ENCODE measurements at regions of chr1 and their contacts with region 1.

Region 1: GRCh38 chr1:241531195-241532161 is 700 bp upstream of the KMO start:
- DNase-seq: peak; percentile 91
- ATAC-seq: peak; percentile 68
- H3K4me3 ChIP-seq: peak overlapping the region; percentile 58 to 98 (median 78)
- H3K4me3 Mint-ChIP-seq: peak overlapping the region; percentile 92
- H3K27ac ChIP-seq: peak overlapping the region; percentile 87 to 96
- H3K27ac Mint-ChIP-seq: peak overlapping the region; percentile 96
- H3K4me1 ChIP-seq: peaks cover 29 to 41% of the 10 kb centered on the region in 2 donors
- H3K4me1 Mint-ChIP-seq: peaks cover 42% of the 10 kb centered on the region
- H3K27me3 ChIP-seq: no peaks in the 10 kb centered on the region
- H3K27me3 Mint-ChIP-seq: no peaks in the 10 kb centered on the region
- CTCF ChIP-seq: peak; percentile 93

Region 2: GRCh38 chr1:241519308-241520079 is 12.0 kb before region 1 on chr1 and contains the start of gene FH:
- CTCF ChIA-PET with region 1: no interaction called
- POLR2A ChIA-PET with region 1: no interaction called
- intact Hi-C with region 1: loop called (anchors 1 kb)
- DNase-seq: peak; percentile 97
- ATAC-seq: peak; percentile 98
- H3K4me3 ChIP-seq: peak within 1 kb of the TSS; percentile 56 to 84 (median 79)
- H3K4me3 Mint-ChIP-seq: peak within 1 kb of the TSS; percentile 89
- H3K27ac ChIP-seq: peak within 1 kb of the TSS; percentile 56 to 84
- H3K27ac Mint-ChIP-seq: peak within 1 kb of the TSS; percentile 71
- H3K4me1 ChIP-seq: peaks cover 9 to 10% of the 10 kb centered on the region in 2 donors
- H3K4me1 Mint-ChIP-seq: peaks cover 23% of the 10 kb centered on the region
- H3K27me3 ChIP-seq: peaks cover 0 to 3% (median 0%) of the 10 kb centered on the region in 4 experiments
- H3K27me3 Mint-ChIP-seq: peaks cover 3% of the 10 kb centered on the region
- CTCF ChIP-seq: no peak
- total RNA-seq, gene FH: 26.0 and 32.4 TPM in 2 replicates

Region 3: GRCh38 chr1:241600496-241600901 is 69.0 kb after region 1 on chr1:
- CTCF ChIA-PET with region 1: interaction called, 4 read pairs
- POLR2A ChIA-PET with region 1: no interaction called
- intact Hi-C with region 1: loop called (anchors 1 kb)
- DNase-seq: peak; percentile 24
- ATAC-seq: peak; percentile 49
- H3K4me3 ChIP-seq: peak overlapping the region in 1 of 5 experiments; percentile 3
- H3K4me3 Mint-ChIP-seq: peak overlapping the region; percentile 35
- H3K27ac ChIP-seq: peak overlapping the region; percentile 34 to 67
- H3K27ac Mint-ChIP-seq: peak overlapping the region; percentile 79
- H3K4me1 ChIP-seq: peaks cover 33 to 37% of the 10 kb centered on the region in 2 donors
- H3K4me1 Mint-ChIP-seq: peaks cover 49% of the 10 kb centered on the region
- H3K27me3 ChIP-seq: no peaks in the 10 kb centered on the region
- H3K27me3 Mint-ChIP-seq: no peaks in the 10 kb centered on the region
- CTCF ChIP-seq: no peak

Region 4: GRCh38 chr1:241640029-241640818 is 108.7 kb after region 1 on chr1 and contains the starts of genes CHML and OPN3:
- CTCF ChIA-PET with region 1: interaction called, 3 read pairs
- POLR2A ChIA-PET with region 1: interaction called, 5 read pairs
- intact Hi-C with region 1: loop called (anchors 1 kb)
- DNase-seq: peak; percentile 93
- ATAC-seq: peak; percentile 94
- H3K4me3 ChIP-seq: peak within 1 kb of the TSS; percentile 78 to 97 (median 94)
- H3K4me3 Mint-ChIP-seq: peak within 1 kb of the TSS; percentile 84
- H3K27ac ChIP-seq: peak within 1 kb of the TSS; percentile 71 to 81
- H3K27ac Mint-ChIP-seq: peak within 1 kb of the TSS; percentile 93
- H3K4me1 ChIP-seq: peaks cover 37 to 43% of the 10 kb centered on the region in 2 donors
- H3K4me1 Mint-ChIP-seq: peaks cover 51% of the 10 kb centered on the region
- H3K27me3 ChIP-seq: no peaks in the 10 kb centered on the region
- H3K27me3 Mint-ChIP-seq: no peaks in the 10 kb centered on the region
- CTCF ChIP-seq: no peak
- total RNA-seq, gene CHML: 31.5 and 34.0 TPM in 2 replicates
- total RNA-seq, gene OPN3: 29.2 and 29.6 TPM in 2 replicates

Region 5: GRCh38 chr1:241895013-241895412 is 363.5 kb after region 1 on chr1:
- CTCF ChIA-PET with region 1: no interaction called
- POLR2A ChIA-PET with region 1: no interaction called
- intact Hi-C with region 1: loop called (anchors 5 kb)
- DNase-seq: no peak
- ATAC-seq: no peak
- H3K4me3 ChIP-seq: no peak overlapping the region
- H3K4me3 Mint-ChIP-seq: no peak overlapping the region
- H3K27ac ChIP-seq: no peak overlapping the region
- H3K27ac Mint-ChIP-seq: no peak overlapping the region
- H3K4me1 ChIP-seq: peaks cover 12 to 15% of the 10 kb centered on the region in 2 donors
- H3K4me1 Mint-ChIP-seq: peaks cover 15% of the 10 kb centered on the region
- H3K27me3 ChIP-seq: no peaks in the 10 kb centered on the region
- H3K27me3 Mint-ChIP-seq: no peaks in the 10 kb centered on the region
- CTCF ChIP-seq: no peak

Region 6: GRCh38 chr1:242139443-242139842 is 608.0 kb after region 1 on chr1:
- CTCF ChIA-PET with region 1: no interaction called
- POLR2A ChIA-PET with region 1: no interaction called
- intact Hi-C with region 1: no loop called
- DNase-seq: no peak
- ATAC-seq: no peak
- H3K4me3 ChIP-seq: no peak overlapping the region
- H3K4me3 Mint-ChIP-seq: no peak overlapping the region
- H3K27ac ChIP-seq: no peak overlapping the region
- H3K27ac Mint-ChIP-seq: no peak overlapping the region
- H3K4me1 ChIP-seq: no peaks in the 10 kb centered on the region
- H3K4me1 Mint-ChIP-seq: no peaks in the 10 kb centered on the region
- H3K27me3 ChIP-seq: peaks cover 0 to 8% (median 0%) of the 10 kb centered on the region in 4 experiments
- H3K27me3 Mint-ChIP-seq: peaks cover 19% of the 10 kb centered on the region
- CTCF ChIP-seq: no peak

Region 7: DNA sequence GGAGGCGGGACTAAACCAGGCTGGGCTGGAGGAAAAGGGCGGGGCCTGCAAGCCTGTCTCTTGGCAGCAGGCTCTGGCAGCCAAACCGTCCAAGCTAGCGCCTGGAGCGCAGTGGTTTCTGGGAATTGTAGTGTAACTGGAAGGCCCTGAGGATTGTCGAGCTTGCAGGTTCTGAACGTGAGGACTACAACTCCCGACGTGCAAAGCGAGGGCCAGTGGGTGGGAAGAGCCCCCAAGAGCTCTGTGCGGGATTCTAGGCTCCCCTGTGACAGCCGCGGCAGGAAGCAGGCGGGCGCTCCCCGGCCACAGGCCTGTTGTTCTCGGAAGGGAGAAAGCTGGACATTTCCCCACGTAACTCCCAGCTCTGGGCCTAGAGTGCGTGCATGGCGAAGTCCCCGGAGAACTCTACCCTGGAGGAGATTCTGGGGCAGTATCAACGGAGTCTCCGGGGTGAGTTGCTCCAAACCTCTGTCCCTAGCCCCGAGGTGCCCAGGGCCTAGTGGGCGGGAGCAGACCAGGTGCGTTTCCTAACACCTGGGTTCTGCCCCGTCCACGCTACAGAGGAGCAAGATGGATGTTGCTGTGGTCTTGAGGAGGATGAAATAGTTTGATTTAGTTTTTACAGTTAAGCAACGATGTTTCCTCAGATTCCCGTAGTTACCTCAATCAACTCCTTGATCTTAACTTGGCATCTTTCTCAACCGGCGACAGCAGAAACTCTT is 1724.5 kb after region 1 on chr1 and contains the start of gene SDCCAG8:
- CTCF ChIA-PET with region 1: no interaction called
- POLR2A ChIA-PET with region 1: no interaction called
- intact Hi-C with region 1: loop called (anchors 10 kb)
- DNase-seq: peak; percentile 98
- ATAC-seq: peak; percentile 77
- H3K4me3 ChIP-seq: peak within 1 kb of the TSS; percentile 75 to 100 (median 94)
- H3K4me3 Mint-ChIP-seq: peak within 1 kb of the TSS; percentile 97
- H3K27ac ChIP-seq: peak within 1 kb of the TSS; percentile 97 to 99
- H3K27ac Mint-ChIP-seq: peak within 1 kb of the TSS; percentile 99
- H3K4me1 ChIP-seq: peaks cover 19 to 29% of the 10 kb centered on the region in 2 donors
- H3K4me1 Mint-ChIP-seq: peaks cover 45% of the 10 kb centered on the region
- H3K27me3 ChIP-seq: no peaks in the 10 kb centered on the region
- H3K27me3 Mint-ChIP-seq: no peaks in the 10 kb centered on the region
- CTCF ChIP-seq: no peak
- total RNA-seq, gene SDCCAG8: 60.7 and 64.8 TPM in 2 replicates

Measured in B cell (primary cell).